ENCODE measurements at regions of chr7 and their contacts with region 1.

Region 1: GRCh38 chr7:26365077-26365900 is 73.6 kb downstream of the SNX10 start:
- DNase-seq: peak; percentile 19 to 74
- ATAC-seq: peak; percentile 76 to 83
- H3K4me3 ChIP-seq: no peak overlapping the region
- H3K27ac ChIP-seq: no peak overlapping the region
- H3K4me1 ChIP-seq: peaks cover 7% of the 10 kb centered on the region; the same call in 1 of the 3 replicates
- CTCF ChIP-seq: peak; percentile 94
- EP300 ChIP-seq: no peak
- POLR2A ChIP-seq: no peak
- RAD21 ChIP-seq: peak; percentile 96 to 98

Region 2: DNA sequence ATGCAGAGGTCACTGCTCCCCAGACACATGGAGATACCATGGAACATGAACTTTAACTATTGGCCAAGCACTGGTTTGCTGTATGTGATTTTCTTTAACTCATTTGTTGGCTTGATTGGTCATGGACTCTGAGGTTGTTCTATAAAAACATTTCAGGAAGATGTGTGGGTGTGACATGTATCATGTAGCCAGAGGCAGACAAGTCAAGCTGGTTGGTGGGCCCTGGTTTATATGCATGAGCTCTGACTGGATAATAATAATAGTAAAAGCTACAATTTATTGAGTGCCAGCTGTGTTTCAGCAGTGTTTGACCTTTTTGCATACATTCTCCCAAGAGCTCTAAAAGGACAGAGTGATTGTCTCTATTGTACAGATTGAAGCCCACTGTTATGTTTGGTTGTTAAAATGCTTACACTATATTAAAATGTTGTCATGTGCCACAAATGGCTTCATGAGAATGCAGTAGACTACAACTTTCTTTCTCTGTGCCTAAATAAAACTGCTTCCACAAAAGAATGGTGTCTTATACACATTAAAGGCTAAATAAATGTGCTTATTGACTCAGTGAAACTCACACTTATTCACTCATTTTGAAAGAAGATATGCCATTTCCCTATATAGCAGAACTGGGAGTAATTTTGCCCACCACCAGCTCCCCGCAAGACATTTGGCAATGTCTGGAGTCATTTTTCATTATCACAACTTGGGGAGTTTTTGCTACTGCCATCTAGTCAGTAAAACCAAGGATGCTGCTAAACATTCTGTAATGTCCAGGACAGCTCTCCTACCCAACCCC is 456.9 kb before region 1 on chr7:
- CTCF ChIA-PET with region 1: interaction called, 10 read pairs
- POLR2A ChIA-PET with region 1: no interaction called
- DNase-seq: no peak
- ATAC-seq: no peak
- H3K4me3 ChIP-seq: no peak overlapping the region
- H3K27ac ChIP-seq: no peak overlapping the region
- H3K4me1 ChIP-seq: no peaks in the 10 kb centered on the region
- CTCF ChIP-seq: no peak
- EP300 ChIP-seq: no peak
- POLR2A ChIP-seq: no peak
- RAD21 ChIP-seq: no peak

Region 3: DNA sequence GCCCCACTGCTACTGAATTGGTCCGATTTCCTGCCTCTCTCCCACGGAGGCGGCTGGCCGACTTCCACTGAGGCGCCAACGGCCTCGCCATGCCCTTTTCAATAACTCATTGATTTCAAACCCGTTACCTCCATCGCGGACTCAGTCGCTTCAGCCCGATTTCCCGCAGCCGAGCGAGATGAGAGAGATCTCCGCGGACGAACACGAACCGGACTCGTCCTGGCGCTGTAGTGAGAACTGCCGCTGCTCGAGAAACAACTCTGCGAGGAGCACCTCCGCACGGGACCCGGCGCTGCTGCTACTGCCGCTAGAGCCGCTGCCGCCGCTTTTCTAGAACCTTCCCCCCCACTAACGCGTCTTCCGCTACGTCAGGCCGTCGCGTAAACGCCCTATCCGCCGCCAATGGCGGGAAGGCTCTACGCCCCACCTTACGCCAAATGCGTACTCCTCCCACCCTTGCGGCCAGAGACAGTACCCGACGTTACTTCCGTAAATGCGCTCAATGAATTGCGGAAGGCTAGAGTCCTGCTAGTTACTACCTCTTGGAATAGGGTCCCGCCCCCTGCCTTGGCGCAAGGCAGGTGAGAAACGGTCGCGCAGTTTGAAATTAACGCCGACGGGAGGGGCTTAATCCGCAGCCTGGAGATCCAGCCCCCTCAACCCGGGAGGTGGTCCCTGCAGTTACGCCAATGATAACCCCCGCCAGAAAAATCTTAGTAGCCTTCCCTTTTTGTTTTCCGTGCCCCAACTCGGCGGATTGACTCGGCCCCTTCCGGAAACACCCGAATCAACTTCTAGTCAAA is 164.6 kb before region 1 on chr7 and contains the start of gene HNRNPA2B1:
- CTCF ChIA-PET with region 1: interaction called, 10 read pairs
- POLR2A ChIA-PET with region 1: interaction called, 8 read pairs
- DNase-seq: peak; percentile 71 to 97
- ATAC-seq: peak; percentile 68 to 78
- H3K4me3 ChIP-seq: peak within 1 kb of the TSS; percentile 92
- H3K27ac ChIP-seq: peak within 1 kb of the TSS; percentile 99
- H3K4me1 ChIP-seq: peaks cover 37% of the 10 kb centered on the region
- CTCF ChIP-seq: no peak
- EP300 ChIP-seq: no peak
- POLR2A ChIP-seq: peak; percentile 99
- RAD21 ChIP-seq: no peak
- polyA plus RNA-seq, gene HNRNPA2B1: 595 and 1,070 TPM in 2 replicates

Region 4: GRCh38 chr7:26291699-26292538 is 73.4 kb before region 1 on chr7 and contains the start of gene SNX10:
- CTCF ChIA-PET with region 1: interaction called, 13 read pairs
- POLR2A ChIA-PET with region 1: no interaction called
- DNase-seq: peak; percentile 50 to 63
- ATAC-seq: peak; percentile 93 to 95
- H3K4me3 ChIP-seq: peak within 1 kb of the TSS; percentile 64
- H3K27ac ChIP-seq: peak within 1 kb of the TSS; percentile 70 to 91
- H3K4me1 ChIP-seq: 0 out of 3 replicates have a peak, but pooled peaks cover 4% of the 10 kb centered on the region
- CTCF ChIP-seq: peak; percentile 43
- EP300 ChIP-seq: no peak
- POLR2A ChIP-seq: peak; percentile 39
- RAD21 ChIP-seq: peak; percentile 31 to 38; a peak in 3 of 5 replicates
- polyA plus RNA-seq, gene SNX10: 10.1 and 12.6 TPM in 2 replicates

Region 5: DNA sequence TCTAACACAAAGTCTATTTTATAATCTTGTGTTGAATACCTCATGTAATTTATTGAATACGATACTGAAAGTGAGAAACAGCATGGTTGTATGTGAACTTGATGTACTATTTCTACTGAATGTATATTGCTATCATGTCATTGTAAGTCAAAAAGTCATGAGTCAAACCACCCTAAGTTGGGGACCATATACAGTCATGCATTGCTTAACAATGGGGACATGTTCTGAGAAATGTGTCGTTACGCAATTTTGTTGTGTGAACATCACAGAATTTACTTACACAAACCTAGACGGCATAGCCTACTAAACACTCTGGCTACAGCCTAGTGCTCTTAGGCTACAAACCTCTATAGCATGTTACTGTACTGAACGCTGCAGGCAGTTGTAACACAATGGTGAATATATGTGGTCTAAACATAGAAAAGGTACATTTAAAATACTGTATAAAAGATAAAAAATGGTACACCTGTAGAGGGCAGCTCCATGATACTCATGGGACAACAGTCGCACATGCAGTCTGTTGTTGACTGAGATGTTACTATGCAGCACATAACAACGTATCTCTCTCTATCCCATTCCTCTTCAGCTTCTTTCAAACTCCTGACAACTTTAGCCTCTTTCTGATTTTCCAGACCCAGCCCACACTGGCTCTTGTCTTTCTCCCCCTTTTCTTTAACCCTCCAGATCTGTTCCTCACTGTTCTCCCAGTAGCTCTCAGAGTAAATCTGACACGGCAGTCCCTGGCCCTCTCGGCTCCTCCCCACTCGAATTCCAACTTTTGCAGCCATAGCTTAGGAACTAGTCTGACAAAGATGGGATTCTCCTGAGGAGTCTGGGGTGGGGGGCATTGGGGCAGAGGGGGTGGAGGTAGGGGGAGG is 16.4 kb after region 1 on chr7:
- CTCF ChIA-PET with region 1: interaction called, 11 read pairs
- POLR2A ChIA-PET with region 1: no interaction called
- DNase-seq: no peak
- ATAC-seq: no peak
- H3K4me3 ChIP-seq: no peak overlapping the region
- H3K27ac ChIP-seq: no peak overlapping the region
- H3K4me1 ChIP-seq: no peaks in the 10 kb centered on the region
- CTCF ChIP-seq: no peak
- EP300 ChIP-seq: no peak
- POLR2A ChIP-seq: no peak
- RAD21 ChIP-seq: no peak

Region 6: DNA sequence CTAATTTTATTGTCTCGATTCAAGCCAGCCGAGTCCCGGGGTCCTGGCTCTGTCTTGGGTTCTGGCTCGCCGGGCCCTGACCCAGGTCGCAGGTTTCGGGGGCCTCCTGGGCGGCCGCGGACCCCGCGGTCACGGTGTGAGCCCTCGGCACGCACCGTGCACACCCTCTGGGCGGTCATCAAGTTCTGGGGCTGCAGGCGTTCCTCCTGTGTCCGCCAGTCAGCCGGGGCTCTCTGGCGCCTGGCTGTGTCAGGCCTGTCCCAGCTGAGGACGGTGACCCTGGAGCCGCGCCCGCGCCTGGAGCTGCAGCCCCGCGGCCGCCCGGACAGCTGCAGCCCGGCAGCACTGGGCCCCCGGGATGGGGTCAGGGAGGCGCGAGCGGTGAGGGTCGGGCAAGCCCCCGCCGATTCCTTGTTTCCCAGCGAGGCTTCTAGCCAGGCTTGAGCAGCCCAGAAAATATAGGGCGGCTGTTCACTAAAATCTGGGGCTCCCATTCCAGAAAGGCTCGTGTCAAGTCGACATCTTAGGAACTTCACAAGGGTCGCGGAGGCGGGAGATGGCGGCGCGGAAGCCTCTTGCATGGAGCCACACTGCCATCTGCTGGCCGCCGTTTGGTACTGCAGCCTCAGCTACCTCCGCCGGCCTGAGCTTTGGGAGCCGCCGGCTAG is 795.4 kb after region 1 on chr7:
- CTCF ChIA-PET with region 1: interaction called, 80 read pairs
- POLR2A ChIA-PET with region 1: interaction called, 6 read pairs
- DNase-seq: peak; percentile 82 to 87
- ATAC-seq: peak; percentile 70 to 84
- H3K4me3 ChIP-seq: peak overlapping the region; percentile 65
- H3K27ac ChIP-seq: peak overlapping the region; percentile 86
- H3K4me1 ChIP-seq: 0 out of 3 replicates have a peak, but pooled peaks cover 3% of the 10 kb centered on the region
- CTCF ChIP-seq: peak; percentile 93
- EP300 ChIP-seq: no peak
- POLR2A ChIP-seq: no peak
- RAD21 ChIP-seq: peak; percentile 91 to 95

Measured in A549 (cell line).